ENCODE measurements at regions of chr7 and their contacts with region 1.

Region 1: DNA sequence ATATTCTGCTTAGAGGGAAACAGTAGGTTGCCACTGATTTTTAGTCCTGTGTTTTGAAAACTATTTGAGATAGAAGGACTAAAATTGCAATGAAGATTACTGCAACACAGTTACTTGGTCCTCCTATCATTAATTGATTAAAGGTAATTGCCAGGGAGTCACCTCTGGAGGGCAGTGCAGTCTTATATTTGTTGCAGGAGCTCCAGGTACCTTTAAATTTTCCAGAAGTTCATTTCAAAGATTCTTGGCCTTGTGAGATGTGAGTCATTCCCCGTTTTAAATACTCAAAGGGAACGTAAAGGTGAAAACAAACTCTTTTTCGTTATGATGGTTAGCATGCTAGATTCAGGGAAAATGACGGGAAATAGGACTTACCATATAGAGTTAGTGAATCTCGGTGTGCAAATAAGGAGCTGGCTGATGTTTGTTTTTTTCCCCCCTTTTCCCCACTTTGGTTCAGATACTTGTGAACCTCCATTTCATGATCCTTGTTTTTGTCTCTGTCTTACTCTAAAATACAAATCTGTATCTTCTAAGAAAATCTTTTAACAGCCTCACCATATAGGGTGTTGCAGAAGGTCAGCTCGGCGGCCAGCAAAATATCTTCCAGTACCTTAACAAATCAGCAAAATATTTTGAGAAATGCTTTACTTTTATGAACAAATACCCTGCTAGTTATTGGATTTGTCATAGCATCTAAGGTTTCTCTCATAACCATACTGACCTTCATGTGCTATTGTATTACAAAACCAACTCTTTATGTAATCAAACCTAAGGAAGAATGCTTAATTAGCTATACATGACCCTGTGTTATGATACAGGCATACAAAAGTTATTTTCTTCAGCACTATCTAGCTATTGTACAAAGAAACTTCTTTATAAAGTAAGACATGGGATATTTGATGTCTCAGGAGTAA is 143.0 kb upstream of the HDAC9 start:
- DNase-seq: peak in 1 of 2 experiments; percentile 44
- H3K4me3 ChIP-seq: no peak overlapping the region
- H3K4me3 Mint-ChIP-seq: no peak overlapping the region
- H3K27ac Mint-ChIP-seq: no peak overlapping the region
- H3K4me1 ChIP-seq: peaks cover 3% of the 10 kb centered on the region; the same call in 1 of the 2 replicates
- H3K4me1 Mint-ChIP-seq: no peaks in the 10 kb centered on the region
- H3K27me3 ChIP-seq: no peaks in the 10 kb centered on the region
- H3K27me3 Mint-ChIP-seq: peaks cover 4% of the 10 kb centered on the region
- CTCF ChIP-seq: peak; percentile 39 to 47

Region 2: DNA sequence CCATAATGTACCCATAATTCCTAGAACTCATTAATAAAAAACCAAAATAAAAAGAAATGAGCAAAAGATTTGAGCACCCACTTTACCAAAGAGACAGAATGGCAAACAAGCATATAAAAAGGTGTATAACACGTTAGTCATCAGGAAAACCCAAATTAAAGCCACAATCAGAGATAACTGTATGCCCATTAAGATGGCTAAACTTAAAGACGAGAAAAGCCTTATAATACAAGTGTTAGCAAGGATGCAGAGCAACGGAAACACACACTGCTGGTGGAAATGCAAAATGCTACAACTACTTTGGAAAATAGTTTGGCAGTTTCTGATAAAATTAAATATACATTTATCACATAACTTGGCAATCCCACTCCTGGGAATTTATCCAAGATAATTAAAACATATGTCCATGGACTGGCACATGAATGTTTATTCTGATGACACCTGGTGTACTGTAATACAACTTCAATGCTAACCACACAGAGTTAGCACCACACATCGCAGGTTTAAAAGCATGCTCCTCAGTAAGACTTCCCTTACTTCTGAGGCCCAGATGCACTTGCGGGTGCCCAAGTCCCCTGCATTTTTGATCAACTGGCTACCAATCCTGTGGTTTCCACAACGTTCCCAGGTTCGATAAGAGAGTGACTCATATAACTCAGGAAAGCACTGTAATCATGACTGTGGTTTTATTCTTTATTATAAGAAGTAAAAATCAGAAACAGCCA is 570.9 kb before region 1 on chr7:
- CTCF ChIA-PET with region 1: no interaction called
- POLR2A ChIA-PET with region 1: no interaction called
- intact Hi-C with region 1: no loop called
- DNase-seq: no peak
- H3K4me3 ChIP-seq: no peak overlapping the region
- H3K4me3 Mint-ChIP-seq: no peak overlapping the region
- H3K27ac Mint-ChIP-seq: no peak overlapping the region
- H3K4me1 ChIP-seq: no peaks in the 10 kb centered on the region
- H3K4me1 Mint-ChIP-seq: no peaks in the 10 kb centered on the region
- H3K27me3 ChIP-seq: no peaks in the 10 kb centered on the region
- H3K27me3 Mint-ChIP-seq: peaks cover 3% of the 10 kb centered on the region
- CTCF ChIP-seq: no peak

Region 3: GRCh38 chr7:18064242-18064838 is 288.3 kb before region 1 on chr7:
- CTCF ChIA-PET with region 1: no interaction called
- POLR2A ChIA-PET with region 1: no interaction called
- intact Hi-C with region 1: no loop called
- DNase-seq: peak in 1 of 2 experiments; percentile 39
- H3K4me3 ChIP-seq: no peak overlapping the region
- H3K4me3 Mint-ChIP-seq: no peak overlapping the region
- H3K27ac Mint-ChIP-seq: no peak overlapping the region
- H3K4me1 ChIP-seq: no peaks in the 10 kb centered on the region
- H3K4me1 Mint-ChIP-seq: no peaks in the 10 kb centered on the region
- H3K27me3 ChIP-seq: no peaks in the 10 kb centered on the region
- H3K27me3 Mint-ChIP-seq: peaks cover 8% of the 10 kb centered on the region
- CTCF ChIP-seq: peak; percentile 45 to 46

Region 4: DNA sequence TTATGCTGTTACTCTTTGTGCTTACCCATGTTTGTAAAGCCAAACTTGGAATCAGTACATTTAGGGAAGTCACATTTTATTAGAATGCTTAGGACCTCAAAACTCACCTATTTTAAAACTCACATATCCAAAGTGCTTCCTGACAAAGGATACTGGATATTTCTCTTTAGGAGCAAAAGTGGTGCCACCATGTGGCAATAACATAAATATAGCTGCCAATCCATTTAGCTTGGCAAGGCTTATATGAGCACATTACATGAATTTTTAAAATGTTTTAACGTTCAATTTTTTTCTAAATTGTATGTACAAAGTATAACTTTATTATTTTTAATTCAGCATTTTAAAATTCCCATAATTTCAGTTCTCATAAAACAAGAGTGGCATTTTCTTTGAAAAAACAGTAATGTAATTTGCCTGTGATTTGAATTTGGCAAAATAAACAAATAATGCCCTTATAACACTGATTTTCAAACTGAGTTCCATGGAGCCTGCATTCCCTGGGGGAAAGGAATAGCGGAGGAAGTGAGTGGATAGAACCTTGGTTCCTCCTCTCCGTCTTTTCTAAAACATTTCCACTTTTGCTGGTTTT is 218.4 kb after region 1 on chr7:
- CTCF ChIA-PET with region 1: interaction called, 15 read pairs
- POLR2A ChIA-PET with region 1: no interaction called
- intact Hi-C with region 1: loop called (anchors 1 kb)
- DNase-seq: peak in 1 of 2 experiments; percentile 13
- H3K4me3 ChIP-seq: no peak overlapping the region
- H3K4me3 Mint-ChIP-seq: no peak overlapping the region
- H3K27ac Mint-ChIP-seq: no peak overlapping the region
- H3K4me1 ChIP-seq: no peaks in the 10 kb centered on the region
- H3K4me1 Mint-ChIP-seq: no peaks in the 10 kb centered on the region
- H3K27me3 ChIP-seq: no peaks in the 10 kb centered on the region
- H3K27me3 Mint-ChIP-seq: no peaks in the 10 kb centered on the region
- CTCF ChIP-seq: no peak

Region 5: GRCh38 chr7:18610331-18610948 is 257.8 kb after region 1 on chr7:
- CTCF ChIA-PET with region 1: no interaction called
- POLR2A ChIA-PET with region 1: no interaction called
- intact Hi-C with region 1: loop called (anchors 1 kb)
- DNase-seq: peak in 1 of 2 experiments; percentile 34
- H3K4me3 ChIP-seq: no peak overlapping the region
- H3K4me3 Mint-ChIP-seq: no peak overlapping the region
- H3K27ac Mint-ChIP-seq: no peak overlapping the region
- H3K4me1 ChIP-seq: no peaks in the 10 kb centered on the region
- H3K4me1 Mint-ChIP-seq: no peaks in the 10 kb centered on the region
- H3K27me3 ChIP-seq: no peaks in the 10 kb centered on the region
- H3K27me3 Mint-ChIP-seq: no peaks in the 10 kb centered on the region
- CTCF ChIP-seq: peak; percentile 62 to 66

Region 6: GRCh38 chr7:18666107-18666728 is 313.6 kb after region 1 on chr7:
- CTCF ChIA-PET with region 1: interaction called, 11 read pairs
- POLR2A ChIA-PET with region 1: no interaction called
- intact Hi-C with region 1: loop called (anchors 1 kb)
- DNase-seq: peak; percentile 68 to 70
- H3K4me3 ChIP-seq: no peak overlapping the region
- H3K4me3 Mint-ChIP-seq: no peak overlapping the region
- H3K27ac Mint-ChIP-seq: no peak overlapping the region
- H3K4me1 ChIP-seq: no peaks in the 10 kb centered on the region
- H3K4me1 Mint-ChIP-seq: no peaks in the 10 kb centered on the region
- H3K27me3 ChIP-seq: no peaks in the 10 kb centered on the region
- H3K27me3 Mint-ChIP-seq: no peaks in the 10 kb centered on the region
- CTCF ChIP-seq: peak; percentile 81 to 85

Measured in Caco-2 (cell line).